CD4-positive, alpha-beta T cell (primary cell): ENCODE measurements at regions of chr12 and their contacts with region 1.

Region 1: DNA sequence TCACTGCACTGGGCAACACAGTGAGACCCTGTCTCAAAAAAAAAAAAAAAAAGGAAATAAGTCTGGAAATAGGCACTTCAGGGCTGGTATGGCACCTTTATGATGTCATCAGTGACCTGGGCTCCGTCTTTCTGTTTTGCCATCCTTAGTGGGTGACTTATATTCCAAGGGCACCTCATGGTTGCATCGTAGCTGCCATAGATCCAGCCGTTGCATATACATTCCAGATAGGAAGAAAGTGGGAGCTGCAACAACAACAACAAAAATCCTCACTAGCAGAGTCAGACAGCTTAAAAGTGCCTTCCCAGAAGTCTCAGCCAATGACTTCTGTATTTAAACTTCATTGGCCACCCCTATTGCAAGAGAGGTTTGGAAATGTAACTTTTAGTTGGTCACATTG is 26.4 kb downstream of the MYL2 start:
- DNase-seq: no peak
- ATAC-seq: no peak
- H3K4me3 ChIP-seq: no peak overlapping the region
- H3K4me3 Mint-ChIP-seq: no peak overlapping the region
- H3K27ac ChIP-seq: no peak overlapping the region
- H3K27ac Mint-ChIP-seq: no peak overlapping the region
- H3K4me1 ChIP-seq: peaks cover 4% of the 10 kb centered on the region
- H3K4me1 Mint-ChIP-seq: no peaks in the 10 kb centered on the region
- H3K27me3 ChIP-seq: no peaks in the 10 kb centered on the region
- H3K27me3 Mint-ChIP-seq: peaks cover 13% of the 10 kb centered on the region
- CTCF ChIP-seq: no peak

Region 2: DNA sequence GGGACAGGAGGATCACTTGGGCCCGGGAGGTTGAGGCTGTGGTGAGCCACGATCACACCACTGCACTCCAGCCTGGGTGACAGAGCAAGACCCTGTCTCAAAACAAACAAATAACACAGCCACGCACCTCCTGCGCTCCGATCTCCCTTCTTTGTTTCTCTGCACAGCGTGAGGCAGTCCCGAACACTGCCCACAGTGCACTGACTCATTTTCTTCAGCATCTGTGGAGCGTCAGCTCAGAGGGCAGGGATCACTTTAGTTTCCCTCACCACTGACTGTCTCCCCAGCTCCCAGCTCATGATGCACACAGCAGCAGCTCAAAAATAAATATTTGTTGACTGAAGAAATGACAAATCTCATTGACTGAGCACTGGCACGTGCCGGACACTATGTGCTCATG is 27.3 kb after region 1 on chr12:
- CTCF ChIA-PET with region 1: no interaction called
- POLR2A ChIA-PET with region 1: no interaction called
- intact Hi-C with region 1: no loop called
- DNase-seq: no peak
- ATAC-seq: no peak
- H3K4me3 ChIP-seq: no peak overlapping the region
- H3K4me3 Mint-ChIP-seq: no peak overlapping the region
- H3K27ac ChIP-seq: no peak overlapping the region
- H3K27ac Mint-ChIP-seq: no peak overlapping the region
- H3K4me1 ChIP-seq: no peaks in the 10 kb centered on the region
- H3K4me1 Mint-ChIP-seq: no peaks in the 10 kb centered on the region
- H3K27me3 ChIP-seq: no peaks in the 10 kb centered on the region
- H3K27me3 Mint-ChIP-seq: peaks cover 17% of the 10 kb centered on the region
- CTCF ChIP-seq: no peak

Region 3: GRCh38 chr12:111313833-111314259 is 419.9 kb after region 1 on chr12:
- CTCF ChIA-PET with region 1: no interaction called
- POLR2A ChIA-PET with region 1: no interaction called
- intact Hi-C with region 1: loop called (anchors 1 to 2 kb)
- DNase-seq: peak; percentile 55 to 83 (median 69)
- ATAC-seq: peak; percentile 54
- H3K4me3 ChIP-seq: no peak overlapping the region
- H3K4me3 Mint-ChIP-seq: no peak overlapping the region
- H3K27ac ChIP-seq: no peak overlapping the region
- H3K27ac Mint-ChIP-seq: no peak overlapping the region
- H3K4me1 ChIP-seq: peaks cover 8% of the 10 kb centered on the region
- H3K4me1 Mint-ChIP-seq: peaks cover 12% of the 10 kb centered on the region
- H3K27me3 ChIP-seq: no peaks in the 10 kb centered on the region
- H3K27me3 Mint-ChIP-seq: peaks cover 17% of the 10 kb centered on the region
- CTCF ChIP-seq: peak; percentile 92